CD4-positive, alpha-beta T cell (primary cell): ENCODE measurements at regions of chr18 and their contacts with region 1.

Region 1: GRCh38 chr18:23918401-23919032 is 96.0 kb upstream of the TTC39C start:
- DNase-seq: peak; percentile 67 to 90 (median 78)
- ATAC-seq: peak; percentile 84
- H3K4me3 ChIP-seq: no peak overlapping the region
- H3K4me3 Mint-ChIP-seq: no peak overlapping the region
- H3K27ac ChIP-seq: no peak overlapping the region
- H3K27ac Mint-ChIP-seq: no peak overlapping the region
- H3K4me1 ChIP-seq: peaks cover 29% of the 10 kb centered on the region
- H3K4me1 Mint-ChIP-seq: peaks cover 23% of the 10 kb centered on the region
- H3K27me3 ChIP-seq: no peaks in the 10 kb centered on the region
- H3K27me3 Mint-ChIP-seq: no peaks in the 10 kb centered on the region
- CTCF ChIP-seq: peak; percentile 93

Region 2: DNA sequence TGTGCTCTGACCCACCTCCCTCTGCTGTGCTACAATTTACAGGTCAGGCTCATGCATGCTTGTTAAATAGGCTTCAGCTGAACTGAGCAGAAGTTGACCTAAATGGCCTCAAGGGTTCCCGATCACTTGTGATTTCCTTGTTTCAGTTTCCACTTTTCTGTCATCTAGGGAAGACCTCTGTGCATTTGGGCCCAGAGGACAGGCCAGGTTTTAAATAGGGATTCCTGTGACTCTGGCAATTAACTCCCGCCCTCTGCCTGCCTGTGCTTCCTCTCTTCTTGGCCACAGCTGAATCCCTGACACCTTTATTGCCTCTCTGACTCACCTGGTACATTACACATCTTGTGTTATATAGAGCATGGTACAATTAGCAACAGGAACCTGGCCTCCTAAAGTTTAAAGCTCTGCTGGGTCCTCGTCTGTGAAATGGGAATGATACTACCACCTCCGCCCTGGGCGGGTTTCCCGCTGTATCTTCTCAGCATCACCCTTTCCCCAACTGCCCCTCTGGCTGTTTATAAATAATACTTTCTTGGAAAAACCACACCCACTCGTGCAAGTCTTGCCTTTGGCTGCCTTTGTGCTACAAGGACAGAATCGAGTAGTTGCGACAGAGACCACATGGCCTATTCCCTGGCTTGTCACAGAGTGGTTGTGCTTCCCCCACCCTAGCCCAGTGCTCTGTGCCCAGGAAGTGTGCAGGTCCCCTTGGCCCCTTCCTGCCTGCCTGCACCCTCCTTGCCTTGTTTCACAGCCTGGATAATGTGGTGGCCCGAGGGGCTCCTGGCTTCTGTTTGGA is 775.3 kb before region 1 on chr18:
- CTCF ChIA-PET with region 1: no interaction called
- POLR2A ChIA-PET with region 1: no interaction called
- intact Hi-C with region 1: no loop called
- DNase-seq: no peak
- ATAC-seq: no peak
- H3K4me3 ChIP-seq: no peak overlapping the region
- H3K4me3 Mint-ChIP-seq: no peak overlapping the region
- H3K27ac ChIP-seq: no peak overlapping the region
- H3K27ac Mint-ChIP-seq: no peak overlapping the region
- H3K4me1 ChIP-seq: peaks cover 3% of the 10 kb centered on the region
- H3K4me1 Mint-ChIP-seq: no peaks in the 10 kb centered on the region
- H3K27me3 ChIP-seq: peaks cover 0 to 6% of the 10 kb centered on the region in 2 experiments
- H3K27me3 Mint-ChIP-seq: peaks cover 10% of the 10 kb centered on the region
- CTCF ChIP-seq: no peak

Region 3: DNA sequence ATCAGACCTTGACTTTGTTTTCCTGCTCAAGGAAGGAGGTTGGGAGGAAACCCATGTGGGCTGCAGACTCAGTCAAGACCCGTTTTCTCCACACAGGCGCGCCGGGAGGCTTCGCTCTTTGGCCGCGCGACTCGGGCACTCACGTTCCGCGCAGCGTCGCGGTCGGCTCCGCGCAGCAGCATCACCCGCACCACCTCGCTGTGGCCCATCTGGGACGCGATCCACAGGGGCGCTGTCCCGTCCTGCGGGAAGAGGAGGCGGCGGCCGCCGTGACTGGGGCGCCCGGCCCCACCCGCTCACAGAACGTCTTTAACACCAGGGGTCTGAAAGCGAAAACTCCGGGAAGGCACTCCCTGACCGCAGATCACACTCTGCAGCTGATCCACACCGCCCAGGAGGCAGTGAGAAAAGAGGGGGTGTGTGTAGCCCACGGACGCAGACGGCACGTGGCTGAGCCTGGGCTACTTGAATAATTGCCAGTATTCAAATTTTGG is 299.1 kb before region 1 on chr18:
- CTCF ChIA-PET with region 1: interaction called, 5 read pairs
- POLR2A ChIA-PET with region 1: no interaction called
- intact Hi-C with region 1: loop called (anchors 2 kb)
- DNase-seq: peak in 5 of 14 experiments; percentile 0 to 36 (median 5)
- ATAC-seq: peak; percentile 37
- H3K4me3 ChIP-seq: peak overlapping the region; percentile 39
- H3K4me3 Mint-ChIP-seq: peak overlapping the region; percentile 48
- H3K27ac ChIP-seq: no peak overlapping the region
- H3K27ac Mint-ChIP-seq: no peak overlapping the region
- H3K4me1 ChIP-seq: peaks cover 12% of the 10 kb centered on the region
- H3K4me1 Mint-ChIP-seq: peaks cover 6% of the 10 kb centered on the region
- H3K27me3 ChIP-seq: peaks cover 26 to 30% of the 10 kb centered on the region in 2 experiments
- H3K27me3 Mint-ChIP-seq: peaks cover 52% of the 10 kb centered on the region
- CTCF ChIP-seq: no peak

Region 4: GRCh38 chr18:23828426-23828825 is 90.1 kb before region 1 on chr18:
- CTCF ChIA-PET with region 1: interaction called, 6 read pairs
- POLR2A ChIA-PET with region 1: no interaction called
- intact Hi-C with region 1: loop called in 1 of 2 experiments (anchors 1 kb)
- DNase-seq: peak in 12 of 14 experiments; percentile 4 to 91 (median 36)
- ATAC-seq: peak; percentile 96
- H3K4me3 ChIP-seq: no peak overlapping the region
- H3K4me3 Mint-ChIP-seq: no peak overlapping the region
- H3K27ac ChIP-seq: peak overlapping the region in 1 of 2 donors; percentile 70
- H3K27ac Mint-ChIP-seq: peak overlapping the region; percentile 25
- H3K4me1 ChIP-seq: peaks cover 15% of the 10 kb centered on the region
- H3K4me1 Mint-ChIP-seq: peaks cover 33% of the 10 kb centered on the region
- H3K27me3 ChIP-seq: no peaks in the 10 kb centered on the region
- H3K27me3 Mint-ChIP-seq: no peaks in the 10 kb centered on the region
- CTCF ChIP-seq: no peak

Region 5: DNA sequence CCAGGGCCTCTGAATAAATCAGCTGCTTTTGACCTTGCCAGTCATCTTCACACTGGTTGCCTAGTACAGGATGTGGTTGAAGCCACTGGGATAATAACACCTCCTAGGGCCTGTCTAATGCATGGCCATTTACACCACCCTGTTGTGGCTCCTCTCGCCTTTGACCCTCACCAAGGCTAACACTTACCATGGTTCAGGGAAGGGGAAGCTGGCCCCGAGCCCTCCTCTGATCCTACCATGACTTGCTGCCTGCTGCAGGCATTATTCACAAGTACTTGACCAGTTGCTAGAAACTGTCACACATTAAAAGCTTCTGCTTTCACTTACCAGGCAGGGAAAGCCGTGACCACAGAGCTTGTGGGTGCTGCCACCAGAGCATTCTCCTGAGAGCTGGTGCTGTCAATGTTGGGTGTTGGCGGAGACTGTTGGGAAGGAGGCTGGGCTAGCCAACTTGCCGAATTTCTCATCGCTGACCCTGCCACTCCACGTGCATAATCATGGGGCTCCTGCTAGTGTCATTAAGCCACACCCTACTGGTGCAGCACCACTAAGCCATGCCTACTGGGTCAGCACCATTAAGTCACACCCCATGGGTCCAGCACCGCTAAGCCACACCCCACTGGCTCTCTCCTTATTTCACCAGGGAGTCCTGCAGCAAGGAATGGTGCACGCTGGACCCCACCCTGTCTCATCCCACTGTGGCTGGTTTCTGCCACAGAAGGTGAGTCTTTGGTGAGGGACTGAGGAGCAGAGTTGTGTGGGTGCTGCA is 49.0 kb after region 1 on chr18:
- CTCF ChIA-PET with region 1: no interaction called
- POLR2A ChIA-PET with region 1: interaction called, 5 read pairs
- intact Hi-C with region 1: loop called in 1 of 2 experiments (anchors 2 kb)
- DNase-seq: peak in 5 of 14 experiments; percentile 10 to 83 (median 48)
- ATAC-seq: no peak
- H3K4me3 ChIP-seq: no peak overlapping the region
- H3K4me3 Mint-ChIP-seq: no peak overlapping the region
- H3K27ac ChIP-seq: no peak overlapping the region
- H3K27ac Mint-ChIP-seq: peak overlapping the region; percentile 95
- H3K4me1 ChIP-seq: peaks cover 86% of the 10 kb centered on the region
- H3K4me1 Mint-ChIP-seq: peaks cover 82% of the 10 kb centered on the region
- H3K27me3 ChIP-seq: no peaks in the 10 kb centered on the region
- H3K27me3 Mint-ChIP-seq: no peaks in the 10 kb centered on the region
- CTCF ChIP-seq: no peak

Region 6: GRCh38 chr18:24118750-24119577 is 200.4 kb after region 1 on chr18:
- CTCF ChIA-PET with region 1: interaction called, 7 read pairs
- POLR2A ChIA-PET with region 1: no interaction called
- intact Hi-C with region 1: loop called in 1 of 2 experiments (anchors 5 kb)
- DNase-seq: peak; percentile 69 to 92 (median 76)
- ATAC-seq: peak; percentile 90
- H3K4me3 ChIP-seq: no peak overlapping the region
- H3K4me3 Mint-ChIP-seq: no peak overlapping the region
- H3K27ac ChIP-seq: no peak overlapping the region
- H3K27ac Mint-ChIP-seq: peak overlapping the region; percentile 73
- H3K4me1 ChIP-seq: peaks cover 6% of the 10 kb centered on the region
- H3K4me1 Mint-ChIP-seq: peaks cover 42% of the 10 kb centered on the region
- H3K27me3 ChIP-seq: no peaks in the 10 kb centered on the region
- H3K27me3 Mint-ChIP-seq: no peaks in the 10 kb centered on the region
- CTCF ChIP-seq: peak; percentile 91